ENCODE measurements at regions of chr19 and their contacts with region 1.

Region 1: GRCh38 chr19:47348819-47349795 is at the start of gene DHX34:
- DNase-seq: peak; percentile 97
- H3K4me3 ChIP-seq: peak within 1 kb of the TSS; percentile 74 to 94 (median 78)
- H3K27ac ChIP-seq: peak within 1 kb of the TSS; percentile 59
- H3K4me1 ChIP-seq: no peaks in the 10 kb centered on the region
- H3K27me3 ChIP-seq: no peaks in the 10 kb centered on the region
- CTCF ChIP-seq: peak; percentile 90 to 99
- total RNA-seq, gene DHX34: 10.5 to 22.4 TPM

Region 2: DNA sequence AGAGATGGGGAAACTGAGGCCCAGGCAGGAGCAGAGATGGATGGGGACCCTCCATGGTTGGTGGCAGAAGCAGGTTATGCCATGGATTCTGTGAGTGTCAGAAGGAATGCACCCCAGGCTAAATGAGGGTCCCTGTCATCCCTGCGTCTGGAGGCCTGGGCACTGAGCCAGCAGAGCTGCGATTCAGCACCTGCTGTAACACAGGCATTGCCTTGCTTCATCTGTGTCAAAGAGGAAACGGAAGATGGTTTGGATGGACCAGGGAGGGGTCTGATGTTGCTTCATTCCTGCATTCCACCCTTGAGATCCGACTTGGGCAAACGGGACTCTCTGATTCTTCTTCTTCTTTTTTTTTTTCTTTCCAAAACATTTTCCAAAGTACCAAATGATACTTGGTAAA is 38.3 kb before region 1 on chr19:
- CTCF ChIA-PET with region 1: no interaction called
- dilution Hi-C with region 1: no loop called
- in situ Hi-C with region 1: no loop called
- intact Hi-C with region 1: loop called (anchors 2 kb)
- DNase-seq: no peak
- H3K4me3 ChIP-seq: no peak overlapping the region
- H3K27ac ChIP-seq: no peak overlapping the region
- H3K4me1 ChIP-seq: peaks cover 3% of the 10 kb centered on the region
- H3K27me3 ChIP-seq: no peaks in the 10 kb centered on the region
- CTCF ChIP-seq: no peak

Region 3: DNA sequence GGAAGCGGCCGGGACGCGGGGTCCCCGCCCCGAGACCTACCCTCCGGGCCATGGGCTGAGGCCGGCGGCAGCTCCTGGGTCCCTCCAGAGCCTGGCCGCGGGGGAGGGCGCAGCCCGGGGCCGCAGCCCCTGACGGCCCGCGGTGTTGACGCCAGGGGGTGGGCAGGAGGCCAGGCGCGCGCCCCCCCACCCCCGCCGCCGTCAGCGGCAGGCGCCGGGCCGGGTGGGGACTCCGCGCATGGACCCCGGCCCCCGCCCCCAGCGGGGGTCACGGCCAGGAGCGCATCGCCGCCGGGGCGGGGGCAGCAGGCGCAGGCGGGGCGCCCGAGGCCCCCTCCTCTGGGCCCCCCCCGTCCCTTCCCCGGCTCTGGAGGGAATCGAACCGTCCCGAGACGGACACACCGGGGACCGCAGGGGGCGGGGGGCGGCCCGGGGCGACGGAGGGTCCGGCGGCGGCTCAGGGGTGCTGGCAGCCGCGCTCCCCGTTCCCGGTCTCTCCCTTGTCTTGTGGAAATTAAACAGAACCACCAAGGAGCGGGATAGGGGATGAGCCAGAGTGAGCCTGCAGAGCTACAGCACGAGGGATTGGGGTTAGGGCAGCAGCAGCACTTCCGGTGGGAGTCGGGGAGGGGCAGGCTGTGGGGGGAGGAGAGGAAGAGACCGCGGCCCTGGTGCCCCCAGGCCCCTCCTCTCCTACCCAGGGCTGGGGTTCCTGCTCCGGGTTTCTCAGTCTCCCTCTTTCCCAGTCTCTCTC is 70.1 kb after region 1 on chr19 and contains the start of gene MEIS3:
- CTCF ChIA-PET with region 1: no interaction called
- dilution Hi-C with region 1: loop called (anchors 5 kb)
- in situ Hi-C with region 1: no loop called
- intact Hi-C with region 1: no loop called
- DNase-seq: no peak
- H3K4me3 ChIP-seq: peak within 1 kb of the TSS; percentile 17 to 41 (median 34)
- H3K27ac ChIP-seq: no peak within 1 kb of the TSS
- H3K4me1 ChIP-seq: no peaks in the 10 kb centered on the region
- H3K27me3 ChIP-seq: peaks cover 52% of the 10 kb centered on the region
- CTCF ChIP-seq: no peak
- total RNA-seq, gene MEIS3: 7.0 to 25.9 TPM

Region 4: DNA sequence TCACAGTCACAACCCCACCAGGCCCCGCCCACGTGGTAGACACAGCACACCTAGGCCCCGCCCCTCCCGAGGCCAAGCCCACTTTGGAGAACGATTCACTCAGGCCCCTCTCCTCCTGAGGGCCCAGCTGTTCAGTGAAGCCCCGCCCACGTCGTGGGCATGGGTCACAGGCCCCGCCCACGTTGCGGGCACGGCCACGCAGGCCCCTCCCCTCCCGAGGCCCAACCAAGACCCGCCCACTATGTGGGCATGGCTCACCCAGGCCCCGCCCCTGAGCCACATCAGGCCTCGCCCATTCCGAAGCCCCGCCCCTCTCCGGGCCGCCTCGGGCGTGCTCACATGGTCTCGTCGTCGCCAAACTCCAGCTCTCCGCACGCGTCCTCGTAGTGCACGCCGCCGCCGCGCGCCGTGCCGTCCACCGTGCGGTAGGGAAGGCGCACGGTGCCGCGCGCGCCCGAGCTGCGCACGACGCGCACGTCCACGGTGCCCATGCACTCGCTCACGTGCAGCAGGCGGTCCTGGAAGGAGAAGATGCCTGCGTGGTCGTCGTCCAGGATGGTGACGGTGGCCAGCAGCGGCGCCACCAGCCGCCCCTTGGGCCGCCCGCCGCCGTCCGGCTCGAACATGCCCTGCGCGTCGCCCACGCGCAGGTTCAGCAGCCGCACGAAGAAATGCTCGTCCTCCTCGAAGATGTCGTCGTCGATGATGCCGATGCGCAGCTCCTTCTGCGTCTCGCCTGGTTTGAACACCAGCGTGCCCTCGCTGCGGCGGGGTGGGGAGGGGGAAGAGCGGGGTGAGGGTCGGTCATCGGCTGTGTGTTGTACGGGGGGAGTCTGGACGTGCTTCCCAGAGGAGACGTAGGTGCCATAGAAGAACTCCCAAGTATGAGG is 98.6 kb after region 1 on chr19:
- CTCF ChIA-PET with region 1: no interaction called
- dilution Hi-C with region 1: loop called (anchors 5 kb)
- in situ Hi-C with region 1: no loop called
- intact Hi-C with region 1: no loop called
- DNase-seq: peak; percentile 49
- H3K4me3 ChIP-seq: no peak overlapping the region
- H3K27ac ChIP-seq: no peak overlapping the region
- H3K4me1 ChIP-seq: peaks cover 5% of the 10 kb centered on the region
- H3K27me3 ChIP-seq: peaks cover 27% of the 10 kb centered on the region
- CTCF ChIP-seq: no peak

Measured in mammary epithelial cell (primary cell).